HEK293T (cell line): ENCODE measurements at regions of chr4 and their contacts with region 1.

Region 1: DNA sequence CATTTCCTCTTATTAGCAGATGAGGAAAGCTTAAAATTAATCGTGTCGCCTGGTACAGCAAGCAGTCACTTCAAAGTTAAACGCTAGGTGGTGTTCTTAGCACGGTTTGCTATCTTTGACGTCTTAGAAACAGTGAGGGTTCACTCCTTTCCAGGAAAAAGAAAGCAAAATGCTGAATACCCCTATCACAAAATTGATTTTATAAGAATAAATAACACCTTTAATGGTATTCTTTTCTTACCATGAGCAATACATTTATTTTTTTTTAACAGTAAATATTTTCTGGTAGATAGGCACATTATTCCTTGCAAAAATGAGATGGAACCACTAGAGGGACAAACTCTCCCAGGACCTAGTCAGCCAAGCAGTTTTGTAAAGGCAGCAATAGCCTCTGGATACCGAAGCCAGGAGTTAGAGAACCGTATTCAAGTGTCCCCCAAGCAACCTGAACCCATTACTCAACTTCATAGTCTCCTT is 153.9 kb downstream of the KDR start:
- DNase-seq: peak; percentile 59

Region 2: GRCh38 chr4:54929459-54929858 is 42.1 kb before region 1 on chr4:
- CTCF ChIA-PET with region 1: no interaction called
- POLR2A ChIA-PET with region 1: no interaction called
- DNase-seq: no peak

Region 3: GRCh38 chr4:55321707-55322264 is 350.3 kb after region 1 on chr4:
- CTCF ChIA-PET with region 1: interaction called, 12 read pairs
- POLR2A ChIA-PET with region 1: no interaction called
- DNase-seq: peak; percentile 61